Right ventricle myocardium superior (tissue), 1 donor: ENCODE measurements at regions of chr7 and their contacts with region 1.

Region 1: GRCh38 chr7:88243345-88243909 is 23.6 kb upstream of the SRI start:
- DNase-seq: no peak
- ATAC-seq: peak; percentile 96

Region 2: GRCh38 chr7:87784423-87784822 is 459.0 kb before region 1 on chr7:
- intact Hi-C with region 1: no loop called
- DNase-seq: no peak
- ATAC-seq: no peak

Region 3: GRCh38 chr7:88357781-88358525 is 114.5 kb after region 1 on chr7:
- intact Hi-C with region 1: loop called (anchors 2 kb)
- DNase-seq: no peak
- ATAC-seq: peak; percentile 97

Region 4: DNA sequence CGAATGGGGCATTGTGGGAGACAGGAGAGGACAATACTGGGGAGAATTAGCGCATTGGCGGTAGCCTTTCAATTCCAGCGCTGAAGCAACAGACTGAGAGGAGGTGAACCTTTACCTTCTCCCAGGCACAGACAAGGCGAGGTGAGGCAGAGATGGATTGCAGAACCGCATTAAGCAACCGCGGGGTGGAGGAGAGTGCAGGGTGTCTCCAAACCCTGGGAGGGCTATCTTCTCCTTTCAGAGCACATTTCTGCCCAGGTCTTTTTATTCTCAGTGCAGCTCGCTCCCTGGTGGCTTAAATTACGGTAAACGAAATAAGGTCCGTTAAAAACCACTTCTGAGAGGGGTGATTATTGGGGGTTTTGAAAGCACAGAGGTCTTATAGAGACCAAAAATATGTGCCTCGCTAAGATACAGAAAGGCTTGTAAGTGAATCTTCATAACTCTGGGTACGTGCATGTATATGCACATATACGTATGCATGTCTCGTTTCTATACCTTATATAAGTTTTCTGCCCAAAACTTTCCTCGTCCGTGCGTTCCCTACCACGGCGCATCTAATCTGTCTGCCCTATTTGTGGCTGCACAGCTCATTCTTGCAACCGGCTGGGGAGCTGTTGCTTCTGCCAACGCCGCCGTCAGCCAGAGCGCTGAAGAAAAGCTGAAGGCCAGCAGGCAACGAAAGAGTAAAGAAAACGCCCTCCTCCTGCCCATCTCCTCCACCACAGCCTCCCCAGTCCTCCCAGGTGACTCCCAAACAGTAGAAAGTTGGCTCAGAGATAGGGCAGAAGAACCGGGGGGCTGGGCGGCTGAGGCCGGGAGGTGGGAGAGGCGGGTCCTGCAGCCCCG is 515.2 kb after region 1 on chr7:
- intact Hi-C with region 1: no loop called
- DNase-seq: peak; percentile 55
- ATAC-seq: peak; percentile 53